CD14-positive monocyte (primary cell): ENCODE measurements at regions of chr16 and their contacts with region 1.

Region 1: DNA sequence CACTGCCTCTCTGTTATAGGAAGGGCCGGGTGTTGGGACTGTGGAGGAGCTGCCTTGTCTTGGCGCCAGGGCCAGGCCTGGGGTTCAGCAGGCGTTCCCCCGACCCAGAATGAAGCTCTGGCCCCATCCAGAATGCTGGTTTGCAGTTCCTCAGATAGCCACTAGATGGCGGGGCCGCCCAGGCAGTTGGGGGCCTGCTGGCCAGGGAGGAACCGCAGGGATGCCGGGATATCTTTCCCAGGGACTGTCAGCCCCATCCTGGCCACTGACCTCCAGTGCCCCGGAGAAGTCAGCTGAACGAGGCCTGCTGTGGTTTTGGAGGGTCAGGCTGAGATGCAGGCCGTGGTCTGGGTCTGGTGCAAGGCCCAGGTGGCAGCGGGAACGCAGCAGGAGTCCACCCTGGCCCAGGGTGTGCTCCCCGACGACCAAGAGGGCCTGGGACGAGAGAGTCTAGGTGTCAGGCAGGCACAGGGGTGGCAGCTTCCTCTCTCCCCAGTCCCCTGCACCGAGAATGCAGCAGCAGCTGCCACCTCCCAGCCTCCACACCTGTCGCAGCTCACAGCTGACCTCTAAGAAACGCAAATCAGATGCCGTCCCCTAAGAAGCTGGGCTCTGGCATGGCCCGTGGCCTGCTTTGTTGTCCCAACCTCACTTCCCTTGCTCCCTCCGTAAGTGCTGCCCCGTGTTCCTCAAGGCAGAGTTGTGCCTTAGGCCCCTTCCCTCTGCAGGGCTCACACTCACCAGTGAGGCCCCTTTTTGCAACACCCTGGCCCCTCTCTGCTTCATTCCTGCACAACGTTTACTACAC is 51.2 kb downstream of the RMI2 start:
- DNase-seq: peak; percentile 38 to 62 (median 58)
- H3K4me3 ChIP-seq: no peak overlapping the region
- H3K4me3 Mint-ChIP-seq: no peak overlapping the region
- H3K27ac ChIP-seq: no peak overlapping the region
- H3K27ac Mint-ChIP-seq: peak overlapping the region in 2 of 7 donors; percentile 24 to 68
- H3K4me1 ChIP-seq: no peaks in the 10 kb centered on the region
- H3K4me1 Mint-ChIP-seq: no peaks in the 10 kb centered on the region
- H3K27me3 ChIP-seq: no peaks in the 10 kb centered on the region
- H3K27me3 Mint-ChIP-seq: peaks cover 3 to 10% (median 5%) of the 10 kb centered on the region in 3 donors
- CTCF ChIP-seq: peak; percentile 100

Region 2: GRCh38 chr16:11524098-11524750 is 127.8 kb after region 1 on chr16:
- intact Hi-C with region 1: loop called in 1 of 2 experiments (anchors 5 kb)
- DNase-seq: no peak
- H3K4me3 ChIP-seq: no peak overlapping the region
- H3K4me3 Mint-ChIP-seq: no peak overlapping the region
- H3K27ac ChIP-seq: no peak overlapping the region
- H3K27ac Mint-ChIP-seq: no peak overlapping the region
- H3K4me1 ChIP-seq: peaks cover 5 to 12% of the 10 kb centered on the region in 2 donors
- H3K4me1 Mint-ChIP-seq: peaks cover 14% of the 10 kb centered on the region
- H3K27me3 ChIP-seq: peaks cover 2 to 15% of the 10 kb centered on the region in 2 donors
- H3K27me3 Mint-ChIP-seq: peaks cover 19 to 30% (median 28%) of the 10 kb centered on the region in 3 donors
- CTCF ChIP-seq: no peak